ENCODE measurements at regions of chr2 and their contacts with region 1.

Region 1: DNA sequence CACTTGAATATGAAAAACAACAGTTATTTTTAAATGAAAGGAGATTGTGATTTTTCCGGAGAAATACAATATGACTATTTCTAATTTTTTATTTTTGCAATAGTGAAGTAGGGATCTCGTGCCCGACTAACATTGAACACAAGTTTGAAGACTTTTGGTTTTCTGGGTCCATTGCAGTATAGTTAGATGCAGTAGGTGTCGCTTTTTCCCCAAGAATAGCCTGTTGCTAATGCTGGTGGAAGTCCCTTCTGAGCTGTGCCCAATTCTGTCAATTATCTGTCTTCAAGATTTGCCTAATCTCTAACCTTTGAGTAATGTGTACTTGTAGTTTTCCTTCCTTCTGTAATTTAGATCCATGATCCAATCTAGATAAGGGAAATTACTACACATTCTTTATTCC is 36.5 kb downstream of the SEMA4F start:
- DNase-seq: peak in 1 of 2 experiments; percentile 66
- H3K4me3 ChIP-seq: no peak overlapping the region
- H3K4me3 Mint-ChIP-seq: no peak overlapping the region
- H3K27ac Mint-ChIP-seq: no peak overlapping the region
- H3K4me1 ChIP-seq: no peaks in the 10 kb centered on the region
- H3K4me1 Mint-ChIP-seq: no peaks in the 10 kb centered on the region
- H3K27me3 ChIP-seq: no peaks in the 10 kb centered on the region
- H3K27me3 Mint-ChIP-seq: no peaks in the 10 kb centered on the region
- CTCF ChIP-seq: peak; percentile 77 to 81

Region 2: GRCh38 chr2:74507145-74507925 is 183.2 kb before region 1 on chr2 and contains the start of gene PCGF1:
- CTCF ChIA-PET with region 1: no interaction called
- POLR2A ChIA-PET with region 1: no interaction called
- intact Hi-C with region 1: no loop called
- DNase-seq: peak; percentile 98 to 99
- H3K4me3 ChIP-seq: peak within 1 kb of the TSS; percentile 68
- H3K4me3 Mint-ChIP-seq: peak within 1 kb of the TSS; percentile 91
- H3K27ac Mint-ChIP-seq: peak within 1 kb of the TSS; percentile 99
- H3K4me1 ChIP-seq: peaks cover 26% of the 10 kb centered on the region
- H3K4me1 Mint-ChIP-seq: peaks cover 28% of the 10 kb centered on the region
- H3K27me3 ChIP-seq: no peaks in the 10 kb centered on the region
- H3K27me3 Mint-ChIP-seq: no peaks in the 10 kb centered on the region
- CTCF ChIP-seq: peak; percentile 70 to 89
- total RNA-seq, gene PCGF1: 27.0 and 29.7 TPM in 2 replicates

Region 3: DNA sequence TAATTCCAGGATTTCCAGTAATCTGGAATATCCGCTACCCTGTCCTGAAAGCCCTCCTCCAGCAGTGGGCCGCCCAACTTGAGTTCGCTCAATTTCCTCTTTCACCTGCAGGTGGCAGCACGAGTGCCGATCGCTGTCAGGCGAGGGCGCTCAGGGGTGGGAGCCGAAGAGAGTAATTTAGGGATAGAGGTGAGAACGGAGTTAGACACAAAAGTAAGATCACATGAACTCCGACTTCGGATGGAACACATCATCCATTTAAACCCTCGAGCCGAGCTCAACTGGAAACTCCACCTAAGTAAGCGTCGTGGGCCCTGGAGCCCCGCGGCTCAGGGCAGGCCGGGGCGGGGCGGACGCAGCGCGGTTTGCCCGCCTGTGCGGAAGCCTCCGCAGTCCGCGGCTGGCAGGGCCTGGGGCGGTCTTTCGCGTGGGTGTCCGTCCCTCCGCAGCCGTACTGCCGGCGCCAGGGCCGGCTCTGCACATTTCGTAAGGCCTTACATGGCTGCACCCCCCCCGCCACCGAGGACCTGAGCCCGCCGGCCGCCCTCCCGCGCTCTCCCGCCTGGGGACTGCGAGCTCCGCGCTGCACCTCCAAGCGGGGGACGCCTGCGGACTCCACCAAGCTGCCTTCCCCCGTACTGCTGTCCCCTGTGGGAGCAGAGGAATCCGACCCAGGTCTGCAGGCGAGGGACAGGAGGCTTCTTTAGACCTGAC is 24.7 kb after region 1 on chr2:
- CTCF ChIA-PET with region 1: interaction called, 8 read pairs
- POLR2A ChIA-PET with region 1: no interaction called
- intact Hi-C with region 1: loop called (anchors 1 kb)
- DNase-seq: peak; percentile 80 to 90
- H3K4me3 ChIP-seq: peak overlapping the region; percentile 62
- H3K4me3 Mint-ChIP-seq: peak overlapping the region; percentile 86
- H3K27ac Mint-ChIP-seq: no peak overlapping the region
- H3K4me1 ChIP-seq: no peaks in the 10 kb centered on the region
- H3K4me1 Mint-ChIP-seq: no peaks in the 10 kb centered on the region
- H3K27me3 ChIP-seq: no peaks in the 10 kb centered on the region; the same call in 1 of the 2 replicates
- H3K27me3 Mint-ChIP-seq: peaks cover 5% of the 10 kb centered on the region
- CTCF ChIP-seq: peak; percentile 88 to 95

Region 4: DNA sequence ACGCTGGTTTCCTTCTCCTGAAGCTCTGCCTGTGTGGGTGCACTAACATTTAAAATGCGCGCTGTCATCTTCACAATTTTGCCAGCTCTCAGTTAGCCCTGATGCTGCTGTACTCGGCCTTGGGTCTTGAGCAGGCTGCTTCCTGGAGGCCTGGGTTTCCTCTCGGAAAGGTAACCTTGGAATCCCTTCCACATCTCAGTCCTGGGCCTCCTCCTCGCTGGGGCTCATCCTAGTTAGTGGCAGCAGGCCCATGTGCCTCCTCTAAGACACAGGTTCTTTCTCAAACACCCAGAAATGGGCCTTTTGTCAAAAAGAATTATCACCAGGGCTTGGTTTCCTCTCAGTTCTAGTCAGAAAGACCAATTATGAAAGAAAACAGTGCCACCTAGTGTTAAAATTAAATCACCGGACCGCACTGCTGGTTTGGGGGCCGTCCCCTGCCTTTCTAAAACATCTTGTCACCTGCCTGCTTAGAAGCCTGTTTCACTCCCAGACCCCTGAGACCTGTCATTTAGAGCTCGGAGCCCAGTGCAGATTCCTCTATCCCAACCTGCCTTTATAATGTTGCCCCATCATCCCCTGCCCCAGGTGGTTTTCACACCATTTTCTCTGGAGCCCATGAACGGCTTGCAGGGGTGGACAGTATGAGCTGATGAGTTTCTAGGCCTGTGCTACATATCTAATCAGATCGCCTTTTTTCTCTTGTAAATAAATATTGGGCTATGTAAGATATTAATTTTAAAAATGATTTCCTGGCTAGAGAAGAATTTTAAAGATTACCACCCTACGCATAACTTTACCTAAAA is 185.7 kb after region 1 on chr2:
- CTCF ChIA-PET with region 1: interaction called, 30 read pairs
- POLR2A ChIA-PET with region 1: no interaction called
- intact Hi-C with region 1: loop called (anchors 1 kb)
- DNase-seq: peak in 1 of 2 experiments; percentile 74
- H3K4me3 ChIP-seq: no peak overlapping the region
- H3K4me3 Mint-ChIP-seq: no peak overlapping the region
- H3K27ac Mint-ChIP-seq: peak overlapping the region; percentile 74
- H3K4me1 ChIP-seq: no peaks in the 10 kb centered on the region
- H3K4me1 Mint-ChIP-seq: no peaks in the 10 kb centered on the region
- H3K27me3 ChIP-seq: no peaks in the 10 kb centered on the region
- H3K27me3 Mint-ChIP-seq: no peaks in the 10 kb centered on the region
- CTCF ChIP-seq: peak; percentile 50 to 65

Region 5: GRCh38 chr2:74887445-74887951 is 196.9 kb after region 1 on chr2:
- CTCF ChIA-PET with region 1: no interaction called
- POLR2A ChIA-PET with region 1: no interaction called
- intact Hi-C with region 1: loop called (anchors 1 kb)
- DNase-seq: no peak
- H3K4me3 ChIP-seq: no peak overlapping the region
- H3K4me3 Mint-ChIP-seq: no peak overlapping the region
- H3K27ac Mint-ChIP-seq: no peak overlapping the region
- H3K4me1 ChIP-seq: no peaks in the 10 kb centered on the region
- H3K4me1 Mint-ChIP-seq: no peaks in the 10 kb centered on the region
- H3K27me3 ChIP-seq: no peaks in the 10 kb centered on the region
- H3K27me3 Mint-ChIP-seq: no peaks in the 10 kb centered on the region
- CTCF ChIP-seq: no peak

Region 6: DNA sequence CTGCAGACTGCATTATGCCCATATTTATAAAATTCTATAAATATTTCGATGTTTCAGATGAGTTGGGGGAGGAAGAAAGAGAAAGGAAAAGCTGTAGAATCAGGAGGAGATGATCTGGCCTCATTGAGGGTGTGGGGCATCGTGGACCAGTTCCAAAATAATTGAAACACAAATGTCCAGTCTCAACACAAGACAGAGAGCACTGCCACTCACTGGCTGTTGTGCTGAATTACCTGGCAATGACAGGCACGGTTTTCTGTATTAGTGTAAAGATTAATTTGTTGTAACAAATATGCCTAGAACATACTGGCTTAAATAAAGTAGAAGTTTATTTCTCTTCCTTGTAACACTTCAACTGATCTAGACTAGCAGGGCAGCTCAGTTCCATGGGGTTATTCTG is 292.0 kb after region 1 on chr2:
- CTCF ChIA-PET with region 1: no interaction called
- POLR2A ChIA-PET with region 1: no interaction called
- intact Hi-C with region 1: loop called (anchors 10 kb)
- DNase-seq: no peak
- H3K4me3 ChIP-seq: no peak overlapping the region
- H3K4me3 Mint-ChIP-seq: no peak overlapping the region
- H3K27ac Mint-ChIP-seq: no peak overlapping the region
- H3K4me1 ChIP-seq: no peaks in the 10 kb centered on the region
- H3K4me1 Mint-ChIP-seq: no peaks in the 10 kb centered on the region
- H3K27me3 ChIP-seq: no peaks in the 10 kb centered on the region
- H3K27me3 Mint-ChIP-seq: no peaks in the 10 kb centered on the region
- CTCF ChIP-seq: peak in 1 of 2 experiments; percentile 39

Measured in Caco-2 (cell line).